Right ventricle myocardium inferior (tissue), 1 donor: ENCODE measurements at regions of chr16 and their contacts with region 1.

Region 1: GRCh38 chr16:12089492-12090150 is 113.1 kb downstream of the SNX29 start:
- DNase-seq: no peak
- ATAC-seq: peak; percentile 57

Region 2: GRCh38 chr16:12141073-12141951 is 51.7 kb after region 1 on chr16:
- intact Hi-C with region 1: loop called (anchors 5 kb)
- DNase-seq: no peak
- ATAC-seq: no peak